ENCODE measurements at regions of chr15 and their contacts with region 1.

Region 1: GRCh38 chr15:63407612-63408011 is 26.0 kb upstream of the CA12 start:
- DNase-seq: no peak
- H3K4me3 ChIP-seq: no peak overlapping the region
- H3K27ac ChIP-seq: no peak overlapping the region
- H3K4me1 ChIP-seq: no peaks in the 10 kb centered on the region
- H3K27me3 ChIP-seq: no peaks in the 10 kb centered on the region
- CTCF ChIP-seq: no peak
- POLR2A ChIP-seq: no peak

Region 2: DNA sequence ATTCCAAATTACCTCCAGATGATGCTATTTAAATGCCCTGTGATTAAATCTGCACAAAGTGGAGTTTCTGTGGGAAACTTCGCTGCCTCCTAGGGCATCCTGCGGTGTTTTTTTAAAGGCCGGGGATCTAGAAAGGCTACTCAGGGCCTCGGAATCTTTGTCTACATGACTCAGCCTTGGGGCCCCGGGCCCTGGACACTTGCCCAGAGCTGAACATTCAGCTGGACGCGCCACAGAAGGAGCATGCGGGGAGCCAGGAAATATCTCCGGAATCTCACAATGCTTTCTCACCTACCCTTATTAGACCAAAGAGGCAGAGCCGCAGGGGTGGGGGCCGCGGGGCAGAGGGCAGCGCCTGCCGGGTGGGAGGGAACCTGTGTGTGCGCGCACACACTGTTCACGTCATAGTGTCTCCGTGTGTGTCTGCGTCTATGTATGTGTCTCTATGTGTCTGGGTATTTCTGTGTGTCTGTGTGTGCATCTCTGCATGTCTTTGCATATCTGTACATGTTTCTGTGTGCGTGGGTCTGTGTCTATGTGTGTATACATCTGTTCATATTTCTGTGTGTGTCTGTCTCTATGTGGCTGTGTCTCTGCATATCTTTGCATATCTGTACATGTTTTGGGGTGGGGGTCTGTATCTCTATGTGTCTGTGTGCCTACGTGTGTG is 510.5 kb before region 1 on chr15:
- intact Hi-C with region 1: no loop called
- DNase-seq: peak; percentile 95 to 96
- H3K4me3 ChIP-seq: peak overlapping the region in 2 of 3 donors; percentile 19 to 23
- H3K27ac ChIP-seq: peak overlapping the region; percentile 97 to 98
- H3K4me1 ChIP-seq: peaks cover 4 to 22% of the 10 kb centered on the region in 2 donors
- H3K27me3 ChIP-seq: no peaks in the 10 kb centered on the region
- CTCF ChIP-seq: no peak
- POLR2A ChIP-seq: no peak

Region 3: DNA sequence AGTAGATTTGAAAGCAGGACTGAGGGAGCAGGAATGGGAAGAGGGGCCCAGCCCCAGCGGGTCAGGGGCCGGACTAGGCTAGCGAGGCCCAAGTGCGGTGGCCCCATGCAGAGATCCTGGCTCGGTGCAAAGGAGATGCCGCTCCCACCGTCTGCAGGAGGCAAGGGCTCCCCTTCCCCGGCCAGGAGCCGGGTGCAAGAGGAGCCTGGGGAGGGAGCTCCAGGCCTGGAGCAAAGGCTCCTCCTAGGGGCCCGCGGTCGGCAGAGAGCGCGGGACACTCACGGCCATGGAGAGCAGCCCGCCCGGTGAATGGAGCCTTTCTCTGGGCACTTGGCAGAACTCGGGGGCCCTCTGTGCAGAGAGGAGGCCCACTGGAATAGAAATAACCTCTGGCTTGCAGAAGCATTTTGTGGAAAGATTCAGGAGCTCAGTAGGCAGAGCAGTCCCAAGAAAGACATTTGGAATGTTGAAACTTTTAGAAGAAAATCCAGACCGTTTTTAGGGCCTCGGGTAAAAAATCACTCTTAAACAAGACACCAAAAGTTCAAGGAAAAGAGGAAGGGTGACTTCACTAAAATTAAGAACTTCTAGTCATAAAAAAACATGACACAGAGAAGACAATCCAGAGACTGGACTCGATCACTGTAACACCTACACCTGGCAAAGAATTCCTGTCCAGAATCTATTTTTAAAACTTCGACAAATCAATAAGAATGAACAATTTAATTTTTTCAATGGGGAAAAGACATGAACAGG is 53.8 kb after region 1 on chr15:
- intact Hi-C with region 1: loop called (anchors 2 kb)
- DNase-seq: no peak
- H3K4me3 ChIP-seq: no peak overlapping the region
- H3K27ac ChIP-seq: no peak overlapping the region
- H3K4me1 ChIP-seq: no peaks in the 10 kb centered on the region
- H3K27me3 ChIP-seq: no peaks in the 10 kb centered on the region
- CTCF ChIP-seq: no peak
- POLR2A ChIP-seq: no peak

Region 4: DNA sequence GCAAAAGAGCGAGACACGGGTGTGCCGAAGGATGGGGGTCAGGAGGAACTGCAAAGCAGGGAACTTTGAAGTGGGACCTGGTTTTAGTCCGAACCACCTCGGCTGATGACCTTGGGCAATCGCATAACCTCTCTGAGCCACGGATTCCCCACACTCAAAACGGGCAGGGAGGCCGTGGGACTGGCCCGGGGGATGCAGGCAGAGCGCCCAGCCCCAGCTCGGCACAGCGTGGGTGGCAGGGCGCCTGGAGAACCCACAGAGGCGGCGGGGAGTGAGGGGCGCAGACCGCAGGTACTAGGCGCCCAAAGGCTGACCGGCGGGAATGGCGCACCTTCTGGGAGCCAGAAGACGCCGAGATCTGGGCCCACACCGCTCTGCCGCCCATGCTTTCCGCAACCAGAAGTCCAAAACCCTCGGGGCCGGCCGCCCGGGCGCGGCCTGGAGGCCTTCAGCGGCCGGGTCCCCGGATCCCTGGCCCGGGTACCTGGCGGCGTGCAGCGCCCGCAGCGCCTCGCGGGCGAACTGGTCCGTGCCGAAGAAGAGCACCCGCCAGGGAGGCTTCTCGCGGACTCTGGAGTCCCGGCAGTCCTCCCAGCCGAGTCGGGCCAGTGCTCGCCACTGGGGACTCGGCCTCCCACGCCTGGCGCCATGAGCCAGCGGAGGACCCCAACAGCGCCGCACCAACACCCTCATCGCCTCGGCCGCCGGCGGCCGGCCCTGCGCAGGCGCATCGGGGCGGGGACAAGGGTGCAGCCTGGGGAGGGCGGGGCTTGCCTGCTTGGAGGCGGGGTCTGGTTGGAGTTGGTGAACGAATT is 1621.5 kb after region 1 on chr15 and contains the start of gene MTFMT:
- intact Hi-C with region 1: no loop called
- DNase-seq: peak; percentile 80 to 90
- H3K4me3 ChIP-seq: peak within 1 kb of the TSS; percentile 87 to 99 (median 88)
- H3K27ac ChIP-seq: peak within 1 kb of the TSS; percentile 51 to 74
- H3K4me1 ChIP-seq: peaks cover 0 to 7% of the 10 kb centered on the region in 2 donors
- H3K27me3 ChIP-seq: no peaks in the 10 kb centered on the region
- CTCF ChIP-seq: no peak
- POLR2A ChIP-seq: peak; percentile 90
- total RNA-seq, gene MTFMT: 23.7 to 28.5 (median 28.4) TPM

Measured in breast epithelium (tissue), 4 donors.